ENCODE measurements at regions of chr11 and their contacts with region 1.

Region 1: GRCh38 chr11:18115360-18116127 is 9.7 kb upstream of the SAAL1 start:
- DNase-seq: peak; percentile 19
- ATAC-seq: peak; percentile 97
- H3K4me3 ChIP-seq: no peak overlapping the region
- H3K27ac ChIP-seq: no peak overlapping the region
- H3K4me1 ChIP-seq: no peaks in the 10 kb centered on the region
- H3K27me3 ChIP-seq: peaks cover 0 to 1% of the 10 kb centered on the region in 2 experiments; a peak in 2 of 4 replicates
- CTCF ChIP-seq: peak; percentile 85 to 91 (median 87); a peak in 5 of 6 replicates
- EP300 ChIP-seq: no peak
- POLR2A ChIP-seq: no peak
- RAD21 ChIP-seq: peak; percentile 92

Region 2: DNA sequence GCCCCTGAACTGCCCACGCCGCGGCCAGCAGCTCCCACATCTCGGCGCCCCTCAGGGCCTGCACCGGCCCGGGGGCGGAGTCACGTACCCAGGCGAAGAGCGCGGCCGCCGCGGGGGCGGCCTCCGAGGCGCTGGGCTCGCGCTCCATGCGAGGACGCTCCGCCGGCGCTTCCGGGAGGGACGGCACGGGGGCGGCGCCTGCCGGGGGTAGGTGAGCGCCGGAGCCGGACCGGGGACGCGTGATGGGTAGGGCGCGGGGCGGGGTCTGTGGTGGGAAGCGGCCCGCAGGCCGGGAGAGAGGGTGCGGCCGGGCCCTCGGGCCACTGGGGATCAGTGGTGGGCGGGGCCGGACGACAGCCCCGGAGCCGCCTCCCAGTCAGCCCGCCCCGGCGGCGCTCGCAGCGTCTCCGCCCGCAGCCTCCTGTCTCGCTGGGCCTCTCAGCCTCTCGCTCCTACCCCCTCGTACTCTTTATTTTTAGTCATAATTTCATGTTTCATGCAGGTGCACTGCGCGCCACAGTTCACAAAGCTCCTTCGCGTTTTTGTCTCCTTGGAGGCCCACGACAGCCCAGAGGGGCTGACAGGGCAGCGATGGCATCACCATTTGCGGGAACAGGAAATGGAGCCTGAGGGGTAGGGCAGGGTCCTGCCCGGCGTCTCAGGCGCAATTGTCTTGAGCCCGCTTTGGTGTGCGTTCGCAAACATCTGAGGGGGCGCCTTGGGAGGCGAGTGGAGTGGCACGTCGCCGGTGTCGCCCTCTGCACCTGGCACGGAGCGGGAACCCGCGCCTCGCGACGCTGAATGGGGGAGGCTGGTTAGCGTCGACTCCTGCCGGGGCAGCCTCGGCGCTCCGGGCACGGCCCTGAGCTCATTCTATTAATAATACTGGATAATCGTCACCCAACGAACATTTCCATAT is 102.4 kb before region 1 on chr11 and contains the start of gene SERGEF:
- CTCF ChIA-PET with region 1: interaction called, 10 read pairs
- POLR2A ChIA-PET with region 1: interaction called, 4 read pairs
- RAD21 ChIA-PET with region 1: interaction called, 5 read pairs
- SMC1A ChIA-PET with region 1: interaction called, 4 read pairs
- in situ Hi-C with region 1: no loop called
- intact Hi-C with region 1: no loop called
- DNase-seq: peak; percentile 75
- ATAC-seq: peak; percentile 94
- H3K4me3 ChIP-seq: peak within 1 kb of the TSS; percentile 88
- H3K27ac ChIP-seq: peak within 1 kb of the TSS; percentile 78
- H3K4me1 ChIP-seq: peaks cover 23% of the 10 kb centered on the region
- H3K27me3 ChIP-seq: no peaks in the 10 kb centered on the region
- CTCF ChIP-seq: 0 out of 6 replicates have a peak, but pooled peaks of 2 of the 3 experiments have one; percentile 0 to 2
- EP300 ChIP-seq: no peak
- POLR2A ChIP-seq: peak; percentile 86
- RAD21 ChIP-seq: no peak
- polyA plus RNA-seq, gene SERGEF: 14.6 to 25.6 TPM

Region 3: DNA sequence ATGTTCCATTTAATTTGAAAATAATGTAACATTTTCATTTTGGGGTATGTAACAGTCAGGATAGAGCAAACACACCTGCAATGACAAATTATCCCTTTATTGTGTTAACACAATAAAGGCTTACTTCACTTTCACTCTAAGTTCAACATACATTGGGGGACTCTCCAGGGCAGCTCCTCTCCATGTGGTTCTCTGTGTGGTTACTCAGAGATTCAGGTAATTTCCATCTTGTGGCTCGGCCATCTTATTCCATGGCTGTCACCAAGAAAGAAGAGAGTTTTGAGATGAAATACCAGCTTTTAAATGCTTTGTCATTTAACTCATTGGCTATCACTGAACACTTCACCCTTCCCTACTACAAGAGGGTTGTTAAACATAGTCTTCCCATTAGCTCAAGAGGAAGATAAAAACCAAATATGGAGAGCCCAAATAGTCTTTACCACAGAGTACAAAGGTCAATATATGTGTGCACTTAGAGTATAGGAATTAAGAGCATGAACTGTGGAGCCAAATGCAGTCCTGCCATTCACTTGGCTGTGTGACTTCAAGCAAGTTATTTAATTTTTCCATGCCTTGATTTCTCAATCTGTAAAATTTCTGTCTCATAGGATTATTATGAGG is 58.9 kb before region 1 on chr11:
- CTCF ChIA-PET with region 1: no interaction called
- POLR2A ChIA-PET with region 1: no interaction called
- RAD21 ChIA-PET with region 1: no interaction called
- SMC1A ChIA-PET with region 1: no interaction called
- in situ Hi-C with region 1: no loop called
- intact Hi-C with region 1: no loop called
- DNase-seq: peak; percentile 9
- ATAC-seq: peak; percentile 98
- H3K4me3 ChIP-seq: no peak overlapping the region
- H3K27ac ChIP-seq: no peak overlapping the region
- H3K4me1 ChIP-seq: no peaks in the 10 kb centered on the region
- H3K27me3 ChIP-seq: no peaks in the 10 kb centered on the region
- CTCF ChIP-seq: no peak
- EP300 ChIP-seq: no peak
- POLR2A ChIP-seq: no peak
- RAD21 ChIP-seq: no peak

Region 4: DNA sequence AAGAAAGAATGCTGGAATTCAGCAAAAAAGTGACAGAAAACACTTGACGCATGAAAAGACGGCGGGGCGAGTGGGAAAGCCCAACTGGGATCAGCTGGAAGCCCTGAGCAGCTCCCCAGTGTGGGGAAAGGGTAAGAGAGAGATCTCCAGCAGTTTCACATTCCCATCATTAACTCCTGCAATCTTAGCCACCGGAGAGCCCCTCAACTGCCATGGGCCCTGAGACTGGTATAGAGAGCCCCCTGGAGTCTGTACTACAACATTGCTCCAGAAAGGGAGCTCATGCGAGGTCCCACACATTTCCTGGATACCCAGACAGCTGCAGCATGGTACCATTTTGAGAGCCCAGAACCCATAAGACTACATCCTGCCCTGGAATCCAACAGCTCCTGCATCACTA is 88.2 kb after region 1 on chr11:
- CTCF ChIA-PET with region 1: interaction called, 61 read pairs
- POLR2A ChIA-PET with region 1: no interaction called
- RAD21 ChIA-PET with region 1: interaction called, 33 read pairs
- SMC1A ChIA-PET with region 1: interaction called, 19 read pairs
- in situ Hi-C with region 1: loop called (anchors 5 kb)
- intact Hi-C with region 1: loop called (anchors 1 kb)
- DNase-seq: no peak
- ATAC-seq: peak; percentile 87
- H3K4me3 ChIP-seq: no peak overlapping the region
- H3K27ac ChIP-seq: no peak overlapping the region
- H3K4me1 ChIP-seq: no peaks in the 10 kb centered on the region
- H3K27me3 ChIP-seq: no peaks in the 10 kb centered on the region; a peak in 1 of 4 replicates
- CTCF ChIP-seq: peak; percentile 55 to 62 (median 56)
- EP300 ChIP-seq: no peak
- POLR2A ChIP-seq: no peak
- RAD21 ChIP-seq: peak; percentile 54

Region 5: GRCh38 chr11:18229501-18229900 is 114.0 kb after region 1 on chr11:
- CTCF ChIA-PET with region 1: no interaction called
- POLR2A ChIA-PET with region 1: no interaction called
- RAD21 ChIA-PET with region 1: no interaction called
- SMC1A ChIA-PET with region 1: no interaction called
- in situ Hi-C with region 1: no loop called
- intact Hi-C with region 1: no loop called
- DNase-seq: peak; percentile 49
- ATAC-seq: peak; percentile 97
- H3K4me3 ChIP-seq: no peak overlapping the region
- H3K27ac ChIP-seq: peak overlapping the region; percentile 68
- H3K4me1 ChIP-seq: peaks cover 8% of the 10 kb centered on the region
- H3K27me3 ChIP-seq: no peaks in the 10 kb centered on the region
- CTCF ChIP-seq: no peak
- EP300 ChIP-seq: no peak
- POLR2A ChIP-seq: no peak
- RAD21 ChIP-seq: no peak

Region 6: DNA sequence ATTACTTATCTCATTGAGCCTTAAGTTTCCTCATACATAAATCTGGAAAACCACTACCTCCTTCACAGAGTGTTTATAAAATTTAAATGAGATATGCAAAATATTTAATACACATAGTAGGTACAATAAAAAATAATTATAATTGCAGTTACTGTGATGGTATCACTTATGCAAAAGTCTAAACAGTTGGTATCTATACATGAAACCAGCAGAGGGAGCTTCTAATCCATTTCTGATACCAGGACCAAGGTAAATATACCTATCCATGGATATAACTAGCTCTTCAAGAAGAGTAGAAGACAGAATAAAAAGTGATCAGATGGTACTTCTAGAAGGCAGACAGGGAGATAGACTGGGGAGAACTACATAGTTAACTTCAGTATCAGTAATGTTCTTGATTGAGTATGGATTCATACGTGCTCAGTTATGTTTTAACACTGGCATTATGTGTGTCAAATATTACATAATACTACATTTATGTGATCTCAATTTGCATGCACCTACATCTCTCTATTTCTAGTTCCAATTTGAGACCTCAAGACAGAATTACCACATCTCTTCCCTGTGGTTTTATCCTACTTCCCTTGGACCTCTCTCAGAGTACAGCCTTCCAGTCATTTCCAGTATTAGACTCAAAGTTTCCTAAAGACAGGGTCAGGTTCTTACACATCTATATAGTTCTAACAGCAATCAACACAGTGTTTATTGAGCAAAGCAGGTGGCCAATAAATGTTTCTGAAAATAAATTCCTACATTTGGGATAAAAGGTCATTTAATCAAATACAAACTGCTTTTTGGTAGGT is 424.9 kb after region 1 on chr11:
- CTCF ChIA-PET with region 1: interaction called, 5 read pairs
- POLR2A ChIA-PET with region 1: no interaction called
- RAD21 ChIA-PET with region 1: interaction called, 5 read pairs
- SMC1A ChIA-PET with region 1: interaction called, 6 read pairs
- in situ Hi-C with region 1: no loop called
- intact Hi-C with region 1: loop called (anchors 5 kb)
- DNase-seq: no peak
- ATAC-seq: peak; percentile 84
- H3K4me3 ChIP-seq: no peak overlapping the region
- H3K27ac ChIP-seq: no peak overlapping the region
- H3K4me1 ChIP-seq: no peaks in the 10 kb centered on the region
- H3K27me3 ChIP-seq: no peaks in the 10 kb centered on the region
- CTCF ChIP-seq: peak; percentile 46 to 69 (median 56)
- EP300 ChIP-seq: no peak
- POLR2A ChIP-seq: no peak
- RAD21 ChIP-seq: peak; percentile 66

Region 7: DNA sequence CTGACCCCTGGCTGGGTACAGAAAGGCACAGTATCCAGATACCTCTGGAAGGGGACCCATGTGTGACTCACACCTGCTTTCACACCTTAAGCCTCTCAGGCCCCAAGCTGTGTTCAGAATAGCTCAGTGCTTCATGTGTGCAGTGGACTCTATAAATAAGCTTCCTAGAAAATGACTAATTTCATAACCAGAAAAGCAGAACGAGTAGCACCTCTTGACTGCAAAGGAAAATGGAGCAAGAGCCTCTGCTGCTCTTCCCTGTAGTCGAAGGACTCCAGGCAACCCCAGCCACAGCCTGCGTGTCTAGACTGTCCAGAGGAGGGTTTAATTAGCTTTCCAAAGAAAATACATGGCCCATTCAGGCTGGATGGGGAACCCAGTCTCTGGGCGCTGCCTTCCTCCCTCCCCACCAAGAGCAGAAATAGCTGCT is 652.9 kb after region 1 on chr11:
- CTCF ChIA-PET with region 1: interaction called, 11 read pairs
- POLR2A ChIA-PET with region 1: no interaction called
- RAD21 ChIA-PET with region 1: interaction called, 16 read pairs
- SMC1A ChIA-PET with region 1: interaction called, 6 read pairs
- in situ Hi-C with region 1: no loop called
- intact Hi-C with region 1: no loop called
- DNase-seq: peak; percentile 77
- ATAC-seq: peak; percentile 80
- H3K4me3 ChIP-seq: no peak overlapping the region
- H3K27ac ChIP-seq: peak overlapping the region; percentile 35
- H3K4me1 ChIP-seq: peaks cover 38% of the 10 kb centered on the region
- H3K27me3 ChIP-seq: no peaks in the 10 kb centered on the region
- CTCF ChIP-seq: no peak
- EP300 ChIP-seq: peak; percentile 92 to 94
- POLR2A ChIP-seq: no peak
- RAD21 ChIP-seq: no peak

Region 8: DNA sequence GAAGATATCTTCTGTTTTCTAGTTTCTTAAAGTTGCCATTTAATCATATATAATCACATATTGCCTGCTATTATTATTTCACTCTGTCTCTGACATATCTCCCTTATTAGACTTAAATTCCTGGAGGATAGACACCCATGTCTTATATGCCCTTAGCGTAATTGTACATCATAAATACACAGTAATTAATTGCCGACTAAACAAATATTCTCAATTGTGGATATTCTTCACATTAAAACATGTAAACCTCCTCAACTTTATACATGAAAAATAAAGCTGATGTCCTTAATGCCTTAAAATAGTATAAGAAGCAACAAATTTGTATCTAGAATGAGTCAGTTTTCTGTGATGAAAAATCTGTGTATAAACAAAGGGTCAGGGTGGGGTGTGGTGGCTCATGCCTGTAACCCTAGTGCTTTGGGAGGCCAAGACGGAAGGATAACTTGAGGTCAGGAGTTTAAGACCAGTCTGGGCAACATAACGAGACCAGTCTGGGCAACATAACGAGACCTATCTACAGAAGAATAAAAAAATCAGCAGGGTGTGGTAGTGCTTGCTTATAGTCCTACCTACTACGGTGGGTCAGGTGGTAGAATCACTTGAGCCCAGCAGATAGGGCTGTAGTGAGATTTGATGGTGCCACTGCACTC is 1007.5 kb after region 1 on chr11:
- CTCF ChIA-PET with region 1: no interaction called
- POLR2A ChIA-PET with region 1: no interaction called
- RAD21 ChIA-PET with region 1: no interaction called
- SMC1A ChIA-PET with region 1: no interaction called
- in situ Hi-C with region 1: no loop called
- intact Hi-C with region 1: no loop called
- DNase-seq: no peak
- ATAC-seq: no peak
- H3K4me3 ChIP-seq: no peak overlapping the region
- H3K27ac ChIP-seq: no peak overlapping the region
- H3K4me1 ChIP-seq: peaks cover 8% of the 10 kb centered on the region
- H3K27me3 ChIP-seq: no peaks in the 10 kb centered on the region
- CTCF ChIP-seq: no peak
- EP300 ChIP-seq: no peak
- POLR2A ChIP-seq: no peak
- RAD21 ChIP-seq: no peak